ENCODE measurements at regions of chr4 and their contacts with region 1.

Region 1: GRCh38 chr4:184474263-184475095 is at the start of gene IRF2:
- DNase-seq: peak; percentile 80 to 98 (median 95)
- ATAC-seq: peak; percentile 93
- H3K4me3 ChIP-seq: peak within 1 kb of the TSS; percentile 89
- H3K4me3 Mint-ChIP-seq: peak within 1 kb of the TSS; percentile 97 to 100 (median 99)
- H3K27ac ChIP-seq: peak within 1 kb of the TSS; percentile 96
- H3K27ac Mint-ChIP-seq: peak within 1 kb of the TSS; percentile 95 to 100 (median 99)
- H3K4me1 ChIP-seq: peaks cover 27 to 34% of the 10 kb centered on the region in 2 donors
- H3K4me1 Mint-ChIP-seq: peaks cover 39 to 72% (median 66%) of the 10 kb centered on the region in 7 donors
- H3K27me3 ChIP-seq: no peaks in the 10 kb centered on the region
- H3K27me3 Mint-ChIP-seq: peaks cover 0 to 4% (median 0%) of the 10 kb centered on the region in 5 donors
- total RNA-seq, gene IRF2: 31.2 to 86.3 (median 75.0) TPM

Region 2: DNA sequence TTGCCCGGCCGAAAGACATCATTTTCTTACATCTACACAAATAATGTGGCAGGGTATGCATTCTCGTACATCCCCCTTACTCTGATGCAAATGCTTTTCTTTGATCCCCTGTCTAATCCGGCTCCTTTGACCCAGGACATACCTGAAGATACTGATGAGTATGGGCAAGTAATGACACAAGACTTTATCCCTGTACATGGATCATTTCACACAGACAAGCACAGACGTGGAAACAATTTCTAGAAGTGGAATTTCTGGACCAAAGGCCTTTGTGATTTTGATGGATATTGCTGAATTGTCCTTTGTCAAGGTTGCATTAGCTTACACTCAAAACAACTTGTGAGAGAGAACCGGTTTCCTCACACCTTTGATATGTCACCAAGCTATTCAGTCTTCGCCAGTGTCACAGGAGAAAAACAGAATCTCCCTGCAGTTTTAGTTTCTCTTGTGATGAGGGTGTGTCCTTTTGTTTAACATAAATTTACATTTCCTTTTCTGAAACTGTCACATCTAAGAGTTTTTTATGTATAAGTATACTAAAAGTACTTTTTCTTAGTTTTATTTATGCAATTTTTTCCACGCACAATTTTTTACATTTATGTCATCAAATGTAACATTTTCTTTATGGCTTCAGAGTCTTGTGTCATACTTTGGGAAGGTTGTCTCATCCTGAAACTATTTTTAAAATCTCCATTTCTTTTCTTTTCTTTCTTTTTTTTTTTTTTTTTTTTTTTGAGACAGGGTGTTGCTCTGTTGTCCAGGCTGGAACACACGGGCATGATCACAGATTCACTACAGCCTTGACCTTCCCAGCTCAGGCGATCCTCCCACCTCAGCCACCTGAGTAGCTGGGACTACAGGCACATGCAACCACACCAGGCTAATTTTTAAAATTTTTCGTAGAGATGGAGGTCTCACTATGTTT is 840.7 kb before region 1 on chr4:
- CTCF ChIA-PET with region 1: no interaction called
- POLR2A ChIA-PET with region 1: no interaction called
- intact Hi-C with region 1: no loop called
- DNase-seq: no peak
- ATAC-seq: no peak
- H3K4me3 ChIP-seq: no peak overlapping the region
- H3K4me3 Mint-ChIP-seq: no peak overlapping the region
- H3K27ac ChIP-seq: no peak overlapping the region
- H3K27ac Mint-ChIP-seq: peak overlapping the region in 1 of 9 donors; percentile 17
- H3K4me1 ChIP-seq: no peaks in the 10 kb centered on the region
- H3K4me1 Mint-ChIP-seq: peaks cover 0 to 4% (median 0%) of the 10 kb centered on the region in 7 donors
- H3K27me3 ChIP-seq: no peaks in the 10 kb centered on the region
- H3K27me3 Mint-ChIP-seq: no peaks in the 10 kb centered on the region

Region 3: GRCh38 chr4:183659029-183659871 is 815.2 kb before region 1 on chr4 and contains the starts of genes RWDD4 and TRAPPC11:
- CTCF ChIA-PET with region 1: no interaction called
- POLR2A ChIA-PET with region 1: no interaction called
- intact Hi-C with region 1: loop called in 1 of 2 experiments (anchors 5 kb)
- DNase-seq: peak; percentile 83 to 97 (median 95)
- ATAC-seq: peak; percentile 99
- H3K4me3 ChIP-seq: peak within 1 kb of the TSS; percentile 87
- H3K4me3 Mint-ChIP-seq: peak within 1 kb of the TSS; percentile 91 to 98 (median 96)
- H3K27ac ChIP-seq: peak within 1 kb of the TSS; percentile 96
- H3K27ac Mint-ChIP-seq: peak within 1 kb of the TSS; percentile 90 to 99 (median 95)
- H3K4me1 ChIP-seq: peaks cover 14 to 19% of the 10 kb centered on the region in 2 donors
- H3K4me1 Mint-ChIP-seq: peaks cover 35 to 48% (median 38%) of the 10 kb centered on the region in 7 donors
- H3K27me3 ChIP-seq: no peaks in the 10 kb centered on the region
- H3K27me3 Mint-ChIP-seq: no peaks in the 10 kb centered on the region
- total RNA-seq, gene RWDD4: 9.3 to 15.8 (median 11.6) TPM
- total RNA-seq, gene TRAPPC11: 26.3 to 48.8 (median 35.6) TPM

Region 4: GRCh38 chr4:184343502-184344177 is 130.8 kb before region 1 on chr4:
- CTCF ChIA-PET with region 1: no interaction called
- POLR2A ChIA-PET with region 1: interaction called, 7 read pairs
- intact Hi-C with region 1: loop called in 1 of 2 experiments (anchors 1 kb)
- DNase-seq: peak in 7 of 9 donors; percentile 18 to 59 (median 46)
- ATAC-seq: peak; percentile 59
- H3K4me3 ChIP-seq: peak overlapping the region; percentile 69
- H3K4me3 Mint-ChIP-seq: peak overlapping the region; percentile 74 to 92 (median 87)
- H3K27ac ChIP-seq: peak overlapping the region; percentile 4
- H3K27ac Mint-ChIP-seq: peak overlapping the region; percentile 40 to 88 (median 53)
- H3K4me1 ChIP-seq: no peaks in the 10 kb centered on the region
- H3K4me1 Mint-ChIP-seq: peaks cover 0 to 32% (median 16%) of the 10 kb centered on the region in 7 donors
- H3K27me3 ChIP-seq: no peaks in the 10 kb centered on the region
- H3K27me3 Mint-ChIP-seq: no peaks in the 10 kb centered on the region

Region 5: GRCh38 chr4:184375027-184375426 is 99.5 kb before region 1 on chr4:
- CTCF ChIA-PET with region 1: no interaction called
- POLR2A ChIA-PET with region 1: no interaction called
- intact Hi-C with region 1: no loop called
- DNase-seq: no peak
- ATAC-seq: no peak
- H3K4me3 ChIP-seq: no peak overlapping the region
- H3K4me3 Mint-ChIP-seq: no peak overlapping the region
- H3K27ac ChIP-seq: no peak overlapping the region
- H3K27ac Mint-ChIP-seq: no peak overlapping the region
- H3K4me1 ChIP-seq: no peaks in the 10 kb centered on the region
- H3K4me1 Mint-ChIP-seq: peaks cover 4 to 22% (median 7%) of the 10 kb centered on the region in 7 donors
- H3K27me3 ChIP-seq: no peaks in the 10 kb centered on the region
- H3K27me3 Mint-ChIP-seq: no peaks in the 10 kb centered on the region

Region 6: DNA sequence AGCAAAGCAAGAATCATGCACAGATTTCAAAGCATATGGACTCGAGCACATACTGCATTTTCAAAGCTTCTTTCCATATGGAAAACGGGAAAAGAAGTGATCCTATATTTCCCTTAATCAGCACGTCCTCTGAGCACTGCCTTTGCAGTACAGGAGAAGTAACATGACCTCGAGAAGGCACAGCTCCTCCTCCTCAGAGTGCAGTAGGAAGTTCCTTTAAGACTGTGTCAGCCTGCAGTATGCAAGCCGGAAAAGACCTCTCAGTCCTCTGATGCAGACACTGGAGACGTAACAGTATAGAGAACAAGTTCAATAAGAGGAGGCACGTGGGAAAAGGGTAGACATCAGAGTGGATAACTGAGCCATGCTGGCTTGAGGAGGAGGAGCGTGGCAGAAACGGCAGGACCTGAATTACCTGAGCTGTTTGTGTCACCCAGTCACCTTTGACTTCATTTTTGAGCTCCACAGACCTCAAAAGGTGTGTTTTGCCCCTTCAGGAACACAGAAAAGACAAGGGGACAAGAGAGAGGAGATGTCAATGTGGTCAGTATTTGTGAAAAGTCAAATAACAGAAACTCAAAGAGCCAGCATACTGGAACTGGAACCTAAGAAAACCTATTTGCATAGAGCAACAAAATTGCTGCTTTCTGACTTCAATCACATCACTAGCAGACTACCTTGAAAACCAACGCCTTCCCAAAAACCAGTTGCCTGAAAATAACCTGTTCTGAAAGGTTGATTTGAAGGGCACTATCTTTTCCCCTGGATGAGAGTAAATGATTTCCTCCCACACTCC is 20.9 kb before region 1 on chr4:
- CTCF ChIA-PET with region 1: no interaction called
- POLR2A ChIA-PET with region 1: interaction called, 14 read pairs
- intact Hi-C with region 1: loop called (anchors 1 kb)
- DNase-seq: peak in 8 of 9 donors; percentile 14 to 82 (median 66)
- ATAC-seq: peak; percentile 98
- H3K4me3 ChIP-seq: peak overlapping the region; percentile 10
- H3K4me3 Mint-ChIP-seq: peak overlapping the region; percentile 22 to 86 (median 70)
- H3K27ac ChIP-seq: peak overlapping the region; percentile 65
- H3K27ac Mint-ChIP-seq: peak overlapping the region; percentile 65 to 98 (median 95)
- H3K4me1 ChIP-seq: peaks cover 18 to 24% of the 10 kb centered on the region in 2 donors
- H3K4me1 Mint-ChIP-seq: peaks cover 70 to 96% (median 88%) of the 10 kb centered on the region in 7 donors
- H3K27me3 ChIP-seq: no peaks in the 10 kb centered on the region
- H3K27me3 Mint-ChIP-seq: no peaks in the 10 kb centered on the region

Region 7: GRCh38 chr4:184538023-184538599 is 63.6 kb after region 1 on chr4:
- CTCF ChIA-PET with region 1: no interaction called
- POLR2A ChIA-PET with region 1: interaction called, 114 read pairs
- intact Hi-C with region 1: loop called (anchors 1 kb)
- DNase-seq: peak in 8 of 9 donors; percentile 42 to 67 (median 56)
- ATAC-seq: peak; percentile 79
- H3K4me3 ChIP-seq: peak overlapping the region; percentile 86
- H3K4me3 Mint-ChIP-seq: peak overlapping the region; percentile 83 to 99 (median 95)
- H3K27ac ChIP-seq: peak overlapping the region; percentile 97
- H3K27ac Mint-ChIP-seq: peak overlapping the region; percentile 90 to 100 (median 99)
- H3K4me1 ChIP-seq: peaks cover 20 to 22% of the 10 kb centered on the region in 2 donors
- H3K4me1 Mint-ChIP-seq: peaks cover 34 to 51% (median 45%) of the 10 kb centered on the region in 7 donors
- H3K27me3 ChIP-seq: no peaks in the 10 kb centered on the region
- H3K27me3 Mint-ChIP-seq: no peaks in the 10 kb centered on the region

Region 8: DNA sequence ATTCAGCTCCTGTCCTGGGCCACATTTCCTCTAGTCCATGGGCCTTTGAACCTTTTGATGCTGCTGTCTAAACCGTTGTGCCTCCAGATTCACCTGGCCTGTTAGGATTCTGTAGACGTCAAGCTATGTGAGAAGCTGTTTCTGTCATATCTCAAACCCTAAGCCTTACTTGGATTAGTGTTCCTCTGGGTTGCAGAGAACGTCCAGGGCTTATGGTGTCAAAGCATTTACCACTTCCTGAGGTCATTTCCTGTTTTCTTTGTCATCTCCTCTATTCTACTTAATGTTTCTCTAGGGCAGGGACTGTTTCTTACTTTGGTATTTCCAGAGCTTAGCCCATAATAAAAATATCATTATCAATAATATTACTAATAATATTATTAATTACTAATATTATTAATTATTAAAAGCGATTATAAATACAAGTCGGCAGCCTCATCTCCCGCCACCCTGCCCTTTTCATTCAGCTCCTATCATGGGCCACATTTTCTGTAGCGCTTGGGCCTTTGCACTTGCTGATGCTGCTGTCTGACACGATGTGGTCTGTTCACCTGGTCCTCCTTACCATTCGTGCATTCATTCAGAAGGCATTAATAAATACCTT is 194.1 kb after region 1 on chr4:
- CTCF ChIA-PET with region 1: no interaction called
- POLR2A ChIA-PET with region 1: no interaction called
- intact Hi-C with region 1: no loop called
- DNase-seq: peak in 2 of 9 donors; percentile 12 to 13
- ATAC-seq: peak; percentile 64
- H3K4me3 ChIP-seq: peak overlapping the region; percentile 14
- H3K4me3 Mint-ChIP-seq: peak overlapping the region in 3 of 10 donors; percentile 16 to 37 (median 21)
- H3K27ac ChIP-seq: no peak overlapping the region
- H3K27ac Mint-ChIP-seq: peak overlapping the region in 7 of 9 donors; percentile 2 to 88 (median 52)
- H3K4me1 ChIP-seq: peaks cover 6 to 22% of the 10 kb centered on the region in 2 donors
- H3K4me1 Mint-ChIP-seq: peaks cover 13 to 39% (median 26%) of the 10 kb centered on the region in 7 donors
- H3K27me3 ChIP-seq: no peaks in the 10 kb centered on the region
- H3K27me3 Mint-ChIP-seq: no peaks in the 10 kb centered on the region

Region 9: DNA sequence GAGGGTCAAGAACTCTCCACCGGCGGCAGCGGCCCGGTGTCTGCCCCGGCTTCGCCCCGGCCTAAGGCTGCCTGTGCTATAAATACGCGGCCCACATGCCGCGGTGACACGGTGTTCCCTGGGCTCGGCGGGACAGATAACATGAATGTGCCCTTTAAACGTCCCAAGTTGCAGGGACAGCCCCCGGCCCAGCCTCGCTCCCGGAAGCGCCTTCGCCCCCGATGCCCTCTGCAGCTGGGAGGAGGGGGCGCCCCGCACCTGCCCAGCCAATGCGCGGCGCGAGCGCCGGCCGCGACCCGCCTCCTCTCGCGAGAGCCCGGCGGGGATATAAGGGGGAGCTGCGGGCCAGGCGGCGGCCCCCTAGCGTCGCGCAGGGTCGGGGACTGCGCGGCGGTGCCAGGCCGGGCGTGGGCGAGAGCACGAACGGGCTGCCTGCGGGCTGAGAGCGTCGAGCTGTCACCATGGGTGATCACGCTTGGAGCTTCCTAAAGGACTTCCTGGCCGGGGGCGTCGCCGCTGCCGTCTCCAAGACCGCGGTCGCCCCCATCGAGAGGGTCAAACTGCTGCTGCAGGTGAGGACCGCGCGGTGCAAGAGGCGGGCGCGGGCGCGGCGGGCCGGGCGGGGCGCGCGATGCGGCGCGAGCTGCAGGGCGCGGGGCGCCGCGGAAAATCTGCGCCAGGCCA is 668.6 kb after region 1 on chr4 and contains the start of gene SLC25A4:
- CTCF ChIA-PET with region 1: no interaction called
- POLR2A ChIA-PET with region 1: no interaction called
- intact Hi-C with region 1: loop called in 1 of 2 experiments (anchors 1 kb)
- DNase-seq: peak; percentile 68 to 81 (median 75)
- ATAC-seq: peak; percentile 95
- H3K4me3 ChIP-seq: peak within 1 kb of the TSS; percentile 57
- H3K4me3 Mint-ChIP-seq: peak within 1 kb of the TSS; percentile 84 to 95 (median 90)
- H3K27ac ChIP-seq: peak within 1 kb of the TSS; percentile 52
- H3K27ac Mint-ChIP-seq: peak within 1 kb of the TSS in 7 of 9 donors; percentile 4 to 89 (median 83)
- H3K4me1 ChIP-seq: peaks cover 4 to 13% of the 10 kb centered on the region in 2 donors
- H3K4me1 Mint-ChIP-seq: peaks cover 11 to 15% (median 12%) of the 10 kb centered on the region in 7 donors
- H3K27me3 ChIP-seq: peaks cover 0 to 3% of the 10 kb centered on the region in 2 donors
- H3K27me3 Mint-ChIP-seq: peaks cover 15 to 69% (median 26%) of the 10 kb centered on the region in 5 donors
- total RNA-seq, gene SLC25A4: 0.60 to 7.2 (median 4.9) TPM